Calu3 (cell line): ENCODE measurements at regions of chr10 and their contacts with region 1.

Region 1: GRCh38 chr10:22714479-22715289 is at the start of gene PIP4K2A:
- DNase-seq: peak; percentile 78
- H3K4me3 Mint-ChIP-seq: peak within 1 kb of the TSS; percentile 76
- H3K27ac Mint-ChIP-seq: peak within 1 kb of the TSS; percentile 21
- H3K4me1 Mint-ChIP-seq: peaks cover 18% of the 10 kb centered on the region
- H3K27me3 Mint-ChIP-seq: no peaks in the 10 kb centered on the region
- CTCF ChIP-seq: no peak
- total RNA-seq, gene PIP4K2A: 22.7 and 24.2 TPM in 2 replicates

Region 2: DNA sequence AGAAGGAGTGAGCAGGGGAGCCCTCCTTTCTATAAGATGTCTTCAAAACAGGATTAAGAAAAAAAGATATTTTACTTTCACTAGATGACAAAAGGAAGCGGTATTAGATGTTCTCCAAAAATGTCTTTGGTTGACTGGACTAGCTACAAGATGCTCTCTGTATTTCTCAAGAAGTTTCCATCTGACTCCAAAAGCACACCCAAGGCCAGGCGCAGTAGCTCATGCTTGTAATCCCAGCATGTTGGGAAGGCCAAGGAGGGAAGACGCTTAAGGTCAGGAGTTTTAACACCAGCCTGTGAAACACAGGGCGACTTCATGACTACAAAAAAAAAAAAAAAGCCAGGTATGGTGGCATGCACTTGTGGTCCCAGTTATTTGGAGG is 84.8 kb before region 1 on chr10:
- CTCF ChIA-PET with region 1: no interaction called
- intact Hi-C with region 1: loop called (anchors 5 kb)
- DNase-seq: no peak
- H3K4me3 Mint-ChIP-seq: no peak overlapping the region
- H3K27ac Mint-ChIP-seq: no peak overlapping the region
- H3K4me1 Mint-ChIP-seq: peaks cover 52% of the 10 kb centered on the region
- H3K27me3 Mint-ChIP-seq: no peaks in the 10 kb centered on the region
- CTCF ChIP-seq: no peak